ENCODE measurements at regions of chr12 and their contacts with region 1.

Region 1: GRCh38 chr12:50111693-50112455 is at the start of gene COX14:
- DNase-seq: peak; percentile 100
- H3K4me3 ChIP-seq: peak within 1 kb of the TSS; percentile 80
- H3K27ac ChIP-seq: peak within 1 kb of the TSS; percentile 85
- H3K4me1 ChIP-seq: peaks cover 33% of the 10 kb centered on the region
- CTCF ChIP-seq: peak; percentile 98
- total RNA-seq, gene COX14: 51.4 and 57.4 TPM in 2 replicates

Region 2: DNA sequence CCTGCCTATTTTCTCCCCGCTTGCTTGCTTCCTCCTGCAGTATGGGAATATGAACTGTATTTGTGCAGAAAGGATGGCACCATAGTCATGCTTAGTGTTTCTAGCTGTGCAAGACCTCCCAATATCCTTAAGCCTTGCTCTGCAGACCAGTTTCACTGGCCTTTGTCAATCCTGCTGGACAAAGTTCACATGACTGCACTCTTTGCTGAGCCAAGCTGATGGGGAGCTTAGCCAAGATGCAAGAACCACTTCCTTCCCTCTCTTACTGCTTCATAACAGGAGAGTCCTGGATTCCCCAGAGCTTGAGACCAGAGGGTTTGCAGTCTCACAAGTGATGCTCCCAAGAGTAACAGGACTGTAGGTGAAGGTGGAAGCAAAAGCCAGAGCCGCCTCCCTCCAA is 50.7 kb before region 1 on chr12:
- CTCF ChIA-PET with region 1: interaction called, 18 read pairs
- POLR2A ChIA-PET with region 1: no interaction called
- intact Hi-C with region 1: no loop called
- DNase-seq: no peak
- H3K4me3 ChIP-seq: no peak overlapping the region
- H3K27ac ChIP-seq: no peak overlapping the region
- H3K4me1 ChIP-seq: peaks cover 9% of the 10 kb centered on the region
- CTCF ChIP-seq: no peak

Region 3: DNA sequence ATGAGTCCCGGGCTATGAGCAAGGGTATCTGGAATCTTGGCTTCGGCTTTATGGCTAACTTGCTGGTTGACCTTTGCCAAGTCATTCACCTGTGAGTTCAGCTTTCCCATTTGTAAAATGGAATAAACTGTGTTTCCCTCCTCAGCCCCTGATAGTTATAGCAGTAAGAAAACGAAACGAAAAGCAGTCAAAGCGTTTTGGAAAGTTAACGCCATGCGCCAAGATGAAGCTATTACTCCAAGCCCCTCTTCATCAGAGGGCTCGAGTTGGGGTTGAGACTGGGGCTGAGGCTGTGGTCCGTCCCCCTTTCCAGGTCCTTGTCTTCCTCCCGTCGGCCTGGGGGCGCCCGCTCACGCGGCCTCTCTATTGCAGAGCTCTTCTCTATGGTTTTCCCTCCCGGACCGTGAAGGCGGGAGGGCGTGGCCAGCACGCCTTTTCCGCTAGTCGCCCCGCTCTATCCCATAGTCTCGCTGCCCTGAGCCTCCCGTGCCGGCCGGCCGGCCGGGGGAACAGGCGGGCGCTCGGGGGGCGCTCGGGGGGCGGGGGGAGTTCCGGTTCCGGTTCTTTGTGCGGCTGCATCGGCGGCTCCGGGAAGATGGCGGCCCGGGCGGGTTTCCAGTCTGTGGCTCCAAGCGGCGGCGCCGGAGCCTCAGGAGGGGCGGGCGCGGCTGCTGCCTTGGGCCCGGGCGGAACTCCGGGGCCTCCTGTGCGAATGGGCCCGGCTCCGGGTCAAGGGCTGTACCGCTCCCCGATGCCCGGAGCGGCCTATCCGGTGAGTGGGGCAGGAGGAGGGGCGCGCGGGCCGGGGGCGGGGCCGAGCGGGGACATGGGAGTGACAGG is 26.9 kb before region 1 on chr12 and contains the start of gene SMARCD1:
- CTCF ChIA-PET with region 1: interaction called, 35 read pairs
- POLR2A ChIA-PET with region 1: interaction called, 62 read pairs
- intact Hi-C with region 1: loop called (anchors 1 kb)
- DNase-seq: peak; percentile 96
- H3K4me3 ChIP-seq: peak within 1 kb of the TSS; percentile 89
- H3K27ac ChIP-seq: peak within 1 kb of the TSS; percentile 83
- H3K4me1 ChIP-seq: peaks cover 38% of the 10 kb centered on the region
- CTCF ChIP-seq: peak; percentile 85
- total RNA-seq, gene SMARCD1: 117 and 134 TPM in 2 replicates

Region 4: DNA sequence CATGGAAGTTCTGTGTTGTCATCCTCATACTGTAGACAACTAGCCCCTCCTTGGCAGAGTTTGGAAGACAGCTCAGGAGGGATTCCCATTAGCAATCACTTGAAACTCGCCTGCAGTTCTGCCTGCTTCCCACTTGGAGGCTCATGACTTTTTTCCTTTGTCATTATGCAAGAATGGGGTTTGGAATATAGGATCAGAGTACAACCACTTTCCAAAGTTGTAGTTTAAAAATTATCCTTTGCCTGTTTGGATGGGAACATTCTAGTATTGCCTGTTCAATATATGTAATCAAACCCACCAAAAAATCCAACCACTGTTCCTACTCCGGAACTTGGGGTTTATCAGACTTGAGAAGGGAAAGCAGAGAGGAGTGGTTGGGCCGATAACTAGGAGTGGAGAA is 10.2 kb before region 1 on chr12:
- CTCF ChIA-PET with region 1: interaction called, 5 read pairs
- POLR2A ChIA-PET with region 1: interaction called, 12 read pairs
- intact Hi-C with region 1: no loop called
- DNase-seq: no peak
- H3K4me3 ChIP-seq: no peak overlapping the region
- H3K27ac ChIP-seq: no peak overlapping the region
- H3K4me1 ChIP-seq: no peaks in the 10 kb centered on the region
- CTCF ChIP-seq: peak; percentile 51

Region 5: DNA sequence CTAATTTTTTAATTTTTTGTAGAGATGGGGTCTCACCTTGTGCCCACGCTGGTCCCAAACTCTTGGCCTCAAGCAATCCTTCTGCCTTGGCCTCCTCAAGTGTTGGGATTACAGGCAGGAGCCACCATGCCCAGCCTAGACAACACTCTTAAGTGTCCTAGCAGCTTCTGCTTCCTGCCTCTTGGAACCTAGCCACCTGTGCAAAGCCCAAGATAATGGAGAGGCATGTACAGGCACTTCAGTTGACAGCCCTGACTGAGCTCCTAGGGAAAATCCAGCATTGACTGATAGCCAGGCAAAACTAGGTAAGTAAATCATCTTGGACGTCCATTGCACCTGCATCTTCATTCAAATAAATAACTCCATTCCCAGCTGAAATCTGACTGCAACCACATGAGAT is 15.7 kb after region 1 on chr12:
- CTCF ChIA-PET with region 1: interaction called, 6 read pairs
- POLR2A ChIA-PET with region 1: interaction called, 17 read pairs
- intact Hi-C with region 1: no loop called
- DNase-seq: no peak
- H3K4me3 ChIP-seq: no peak overlapping the region
- H3K27ac ChIP-seq: no peak overlapping the region
- H3K4me1 ChIP-seq: peaks cover 6% of the 10 kb centered on the region
- CTCF ChIP-seq: no peak

Region 6: DNA sequence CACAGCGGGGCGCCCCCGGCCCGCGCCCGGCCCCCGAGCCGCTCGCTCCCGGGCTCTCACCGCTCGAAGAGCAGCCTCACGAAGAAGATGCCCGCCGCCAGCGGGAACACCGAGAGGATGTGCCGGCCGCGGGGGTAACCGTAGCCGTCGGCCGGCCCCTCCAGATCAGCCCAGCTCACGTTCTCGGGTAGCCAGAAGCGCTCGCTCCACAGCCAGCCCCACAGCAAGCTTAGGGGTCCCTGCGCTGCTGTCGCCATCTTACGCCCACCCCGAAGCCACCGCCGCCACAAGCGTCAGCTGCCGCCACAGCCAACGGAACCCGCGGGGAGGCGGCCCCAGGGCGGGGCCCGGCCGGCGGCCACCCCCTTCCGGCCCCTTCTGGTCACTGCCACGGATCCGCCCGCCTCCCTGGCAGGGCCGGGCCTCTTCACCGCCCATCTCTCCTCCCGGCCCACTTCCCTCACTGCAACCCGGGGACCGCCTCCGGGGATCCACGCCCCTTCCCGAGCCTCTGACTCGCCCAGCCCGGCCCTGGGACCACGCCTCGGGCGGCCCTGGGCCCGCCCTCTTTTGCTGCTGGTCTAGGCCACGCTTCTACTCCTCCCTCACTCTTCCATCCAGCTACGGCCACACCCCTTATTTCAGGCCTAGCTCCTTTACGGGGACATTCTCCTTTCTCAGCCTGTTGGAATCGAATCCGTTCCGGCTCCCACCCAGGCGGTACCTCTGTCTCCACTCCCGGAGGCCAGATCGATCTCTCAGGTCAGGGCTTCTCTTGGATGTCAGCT is 55.4 kb after region 1 on chr12 and contains the start of gene CERS5:
- CTCF ChIA-PET with region 1: interaction called, 8 read pairs
- POLR2A ChIA-PET with region 1: interaction called, 16 read pairs
- intact Hi-C with region 1: loop called (anchors 1 kb)
- DNase-seq: peak; percentile 96
- H3K4me3 ChIP-seq: peak within 1 kb of the TSS; percentile 93
- H3K27ac ChIP-seq: peak within 1 kb of the TSS; percentile 71
- H3K4me1 ChIP-seq: peaks cover 11% of the 10 kb centered on the region
- CTCF ChIP-seq: no peak
- total RNA-seq, gene CERS5: 27.6 and 28.6 TPM in 2 replicates

Region 7: DNA sequence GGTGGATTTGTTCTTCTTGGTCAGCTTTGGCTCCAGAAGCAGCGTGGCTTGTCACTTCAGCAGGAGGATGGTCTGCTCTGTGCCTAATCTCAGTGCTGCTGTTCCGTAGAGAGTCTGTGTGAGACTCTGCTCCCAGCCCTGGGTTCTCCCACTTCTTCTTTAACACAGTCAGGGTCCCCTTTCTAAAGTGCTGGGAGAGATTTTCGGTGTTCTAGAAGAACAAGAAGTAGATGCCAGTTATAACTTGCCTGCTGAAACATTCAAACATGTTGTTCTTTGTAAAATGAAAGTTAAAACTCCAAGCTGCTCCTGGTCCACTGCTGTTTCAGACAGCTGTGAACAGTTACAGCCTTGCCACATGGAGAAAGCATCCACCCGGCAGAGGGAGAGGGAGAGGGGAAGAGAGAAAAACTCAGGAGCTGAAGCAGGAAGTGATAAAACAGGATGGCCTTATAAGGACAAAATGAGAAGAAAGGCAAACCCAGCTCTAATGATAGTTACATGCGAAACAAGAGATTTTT is 110.5 kb after region 1 on chr12:
- CTCF ChIA-PET with region 1: interaction called, 3 read pairs
- POLR2A ChIA-PET with region 1: interaction called, 6 read pairs
- intact Hi-C with region 1: loop called (anchors 5 kb)
- DNase-seq: peak; percentile 50
- H3K4me3 ChIP-seq: peak overlapping the region; percentile 72
- H3K27ac ChIP-seq: peak overlapping the region; percentile 86
- H3K4me1 ChIP-seq: peaks cover 39% of the 10 kb centered on the region
- CTCF ChIP-seq: no peak; the same call in 1 of the 2 replicates

Measured in OCI-LY7 (cell line).